Heart left ventricle (tissue), 16 donors: ENCODE measurements at regions of chr1 and their contacts with region 1.

Region 1: GRCh38 chr1:33219881-33220661 is 36.2 kb upstream of the ZNF362 start:
- DNase-seq: no peak
- ATAC-seq: peak in 2 of 4 donors; percentile 16 to 44
- H3K4me3 ChIP-seq: no peak overlapping the region
- H3K27ac ChIP-seq: peak overlapping the region in 1 of 12 donors; percentile 16
- H3K4me1 ChIP-seq: peaks cover 0 to 26% (median 0%) of the 10 kb centered on the region in 12 donors
- H3K27me3 ChIP-seq: no peaks in the 10 kb centered on the region
- CTCF ChIP-seq: no peak
- POLR2A ChIP-seq: no peak

Region 2: GRCh38 chr1:33195556-33195955 is 24.5 kb before region 1 on chr1:
- intact Hi-C with region 1: no loop called
- DNase-seq: no peak
- ATAC-seq: no peak
- H3K4me3 ChIP-seq: no peak overlapping the region
- H3K27ac ChIP-seq: no peak overlapping the region
- H3K4me1 ChIP-seq: no peaks in the 10 kb centered on the region
- H3K27me3 ChIP-seq: peaks cover 0 to 6% (median 0%) of the 10 kb centered on the region in 9 donors
- CTCF ChIP-seq: no peak
- POLR2A ChIP-seq: no peak

Region 3: GRCh38 chr1:33256701-33257399 is 36.8 kb after region 1 on chr1:
- intact Hi-C with region 1: loop called in 1 of 10 experiments (anchors 5 kb)
- DNase-seq: peak; percentile 53 to 77 (median 58)
- ATAC-seq: peak in 3 of 4 donors; percentile 21 to 50 (median 40)
- H3K4me3 ChIP-seq: peak overlapping the region; percentile 35 to 99 (median 80)
- H3K27ac ChIP-seq: peak overlapping the region; percentile 51 to 94 (median 88)
- H3K4me1 ChIP-seq: peaks cover 18 to 56% (median 44%) of the 10 kb centered on the region in 12 donors
- H3K27me3 ChIP-seq: no peaks in the 10 kb centered on the region
- CTCF ChIP-seq: no peak
- POLR2A ChIP-seq: no peak

Region 4: GRCh38 chr1:33300673-33301072 is 80.6 kb after region 1 on chr1:
- intact Hi-C with region 1: loop called in 8 of 10 experiments (anchors 2 to 10 kb)
- DNase-seq: peak in 2 of 5 donors; percentile 58 to 67
- ATAC-seq: peak in 2 of 4 donors; percentile 35 to 52
- H3K4me3 ChIP-seq: no peak overlapping the region
- H3K27ac ChIP-seq: peak overlapping the region in 3 of 12 donors; percentile 7 to 56 (median 45)
- H3K4me1 ChIP-seq: peaks cover 0 to 27% (median 12%) of the 10 kb centered on the region in 12 donors
- H3K27me3 ChIP-seq: no peaks in the 10 kb centered on the region
- CTCF ChIP-seq: no peak
- POLR2A ChIP-seq: no peak

Region 5: GRCh38 chr1:33361532-33362235 is 141.6 kb after region 1 on chr1:
- intact Hi-C with region 1: loop called in 6 of 10 experiments (anchors 5 to 10 kb)
- DNase-seq: peak in 2 of 5 donors; percentile 32 to 52
- ATAC-seq: peak; percentile 9 to 74 (median 55)
- H3K4me3 ChIP-seq: no peak overlapping the region
- H3K27ac ChIP-seq: peak overlapping the region in 11 of 12 donors; percentile 23 to 85 (median 65)
- H3K4me1 ChIP-seq: peaks cover 17 to 86% (median 59%) of the 10 kb centered on the region in 12 donors
- H3K27me3 ChIP-seq: no peaks in the 10 kb centered on the region
- CTCF ChIP-seq: no peak
- POLR2A ChIP-seq: no peak

Region 6: GRCh38 chr1:33455539-33456501 is 235.7 kb after region 1 on chr1:
- intact Hi-C with region 1: loop called in 5 of 10 experiments (anchors 5 to 10 kb)
- DNase-seq: peak in 4 of 5 donors; percentile 51 to 64 (median 58)
- ATAC-seq: peak; percentile 68 to 89 (median 87)
- H3K4me3 ChIP-seq: no peak overlapping the region
- H3K27ac ChIP-seq: peak overlapping the region in 10 of 12 donors; percentile 11 to 66 (median 43)
- H3K4me1 ChIP-seq: peaks cover 0 to 47% (median 19%) of the 10 kb centered on the region in 12 donors
- H3K27me3 ChIP-seq: no peaks in the 10 kb centered on the region
- CTCF ChIP-seq: peak; percentile 43 to 69 (median 54)
- POLR2A ChIP-seq: no peak

Region 7: DNA sequence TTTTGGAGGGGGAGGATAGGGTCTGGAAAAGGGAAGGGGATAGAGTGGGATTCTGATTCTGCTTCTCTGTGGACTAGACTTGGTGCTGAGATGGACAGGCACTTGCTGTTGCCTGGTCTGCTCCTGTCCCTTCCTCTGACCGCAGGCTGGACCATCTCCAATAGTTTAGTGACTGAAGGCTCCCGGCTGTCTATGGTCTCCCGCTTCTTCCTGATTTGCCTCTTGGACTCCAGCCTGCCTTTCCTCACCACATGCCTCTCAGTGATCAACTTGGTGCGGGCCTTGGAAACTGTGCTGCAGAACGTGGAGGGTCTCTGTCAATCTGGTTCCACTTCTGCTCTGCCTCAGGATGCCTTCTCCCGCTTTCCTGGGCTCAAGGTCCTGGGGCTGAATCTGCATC is 246.1 kb after region 1 on chr1:
- intact Hi-C with region 1: loop called in 4 of 10 experiments (anchors 5 to 10 kb)
- DNase-seq: peak in 4 of 5 donors; percentile 56 to 72 (median 65)
- ATAC-seq: peak in 2 of 4 donors; percentile 25 to 29
- H3K4me3 ChIP-seq: no peak overlapping the region
- H3K27ac ChIP-seq: peak overlapping the region in 2 of 12 donors; percentile 7 to 12
- H3K4me1 ChIP-seq: peaks cover 0 to 48% (median 26%) of the 10 kb centered on the region in 12 donors
- H3K27me3 ChIP-seq: no peaks in the 10 kb centered on the region
- CTCF ChIP-seq: no peak
- POLR2A ChIP-seq: no peak

Region 8: DNA sequence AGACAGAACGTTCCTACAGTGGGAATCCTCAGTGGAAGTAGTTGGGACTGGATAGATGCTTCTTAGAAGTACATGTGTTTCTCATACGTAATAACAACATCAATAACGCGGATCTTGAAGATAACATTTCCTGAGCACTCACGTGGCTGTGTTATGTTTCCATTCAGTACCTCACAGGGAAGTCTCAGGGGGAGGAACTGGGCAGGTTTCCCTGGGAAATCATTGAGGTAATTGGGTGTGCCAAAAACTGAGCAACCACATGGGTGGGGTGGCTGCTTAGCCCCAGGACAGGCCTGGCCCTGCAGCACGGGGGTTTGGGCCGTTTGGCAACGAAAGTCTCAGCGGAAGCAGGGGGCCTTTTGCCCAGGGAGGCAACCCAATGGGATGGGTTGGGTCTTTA is 386.2 kb after region 1 on chr1:
- intact Hi-C with region 1: loop called in 5 of 10 experiments (anchors 5 to 10 kb)
- DNase-seq: peak in 4 of 5 donors; percentile 62 to 77 (median 73)
- ATAC-seq: peak; percentile 70 to 88 (median 76)
- H3K4me3 ChIP-seq: no peak overlapping the region
- H3K27ac ChIP-seq: peak overlapping the region in 9 of 12 donors; percentile 34 to 88 (median 76)
- H3K4me1 ChIP-seq: peaks cover 0 to 35% (median 8%) of the 10 kb centered on the region in 12 donors
- H3K27me3 ChIP-seq: no peaks in the 10 kb centered on the region
- CTCF ChIP-seq: no peak
- POLR2A ChIP-seq: no peak